HAP-1 (cell line): ENCODE measurements at regions of chr2 and their contacts with region 1.

Region 1: DNA sequence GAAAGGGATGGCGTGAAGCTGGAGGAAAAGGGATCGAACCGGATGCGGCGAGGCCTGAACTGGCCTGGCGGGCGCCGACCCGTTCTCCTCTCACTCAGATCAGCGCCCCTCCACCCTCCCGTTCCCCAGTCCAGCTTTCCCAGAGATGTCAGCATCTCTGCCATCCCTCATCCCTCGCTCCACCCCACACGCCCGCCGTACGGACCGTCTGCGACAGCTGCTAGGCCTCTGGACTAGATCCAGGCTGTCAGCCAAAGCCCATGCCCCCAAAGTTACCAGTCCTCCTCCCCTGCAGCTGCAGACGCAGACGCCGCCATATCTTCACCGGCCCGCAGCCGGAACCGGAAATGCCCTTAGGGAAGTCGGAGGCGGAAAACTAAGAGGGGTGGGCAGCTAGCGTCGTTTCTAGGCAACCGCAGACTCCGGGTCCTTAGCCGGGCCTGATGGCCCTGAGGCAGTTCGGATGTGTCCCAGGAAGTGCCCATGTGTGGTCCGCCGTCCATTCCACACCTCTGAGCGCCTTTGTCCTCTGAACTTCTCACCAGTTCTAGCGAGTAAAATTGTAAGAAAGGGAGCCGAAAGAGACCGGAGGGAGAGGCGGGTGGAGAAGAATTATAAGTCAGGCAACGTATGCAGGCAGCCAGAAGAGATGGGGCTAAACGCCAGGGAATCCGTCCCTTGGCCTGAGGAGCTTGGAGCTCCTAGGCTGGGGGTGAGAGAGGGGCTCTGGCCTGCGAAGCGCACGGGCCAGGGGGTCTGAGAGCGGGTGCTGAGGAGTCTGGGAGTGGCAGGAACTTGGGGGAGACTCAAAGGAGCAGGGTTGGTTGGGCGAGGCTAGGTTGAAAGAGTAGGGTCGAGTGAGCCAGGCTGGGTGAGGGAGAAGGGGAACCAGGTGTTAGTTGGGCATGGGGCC is at the starts of genes RNF25 and STK36:
- DNase-seq: peak; percentile 91 to 93
- H3K4me3 ChIP-seq: peak within 1 kb of the TSS; percentile 94
- H3K4me1 ChIP-seq: no peaks in the 10 kb centered on the region
- H3K27me3 ChIP-seq: no peaks in the 10 kb centered on the region

Region 2: DNA sequence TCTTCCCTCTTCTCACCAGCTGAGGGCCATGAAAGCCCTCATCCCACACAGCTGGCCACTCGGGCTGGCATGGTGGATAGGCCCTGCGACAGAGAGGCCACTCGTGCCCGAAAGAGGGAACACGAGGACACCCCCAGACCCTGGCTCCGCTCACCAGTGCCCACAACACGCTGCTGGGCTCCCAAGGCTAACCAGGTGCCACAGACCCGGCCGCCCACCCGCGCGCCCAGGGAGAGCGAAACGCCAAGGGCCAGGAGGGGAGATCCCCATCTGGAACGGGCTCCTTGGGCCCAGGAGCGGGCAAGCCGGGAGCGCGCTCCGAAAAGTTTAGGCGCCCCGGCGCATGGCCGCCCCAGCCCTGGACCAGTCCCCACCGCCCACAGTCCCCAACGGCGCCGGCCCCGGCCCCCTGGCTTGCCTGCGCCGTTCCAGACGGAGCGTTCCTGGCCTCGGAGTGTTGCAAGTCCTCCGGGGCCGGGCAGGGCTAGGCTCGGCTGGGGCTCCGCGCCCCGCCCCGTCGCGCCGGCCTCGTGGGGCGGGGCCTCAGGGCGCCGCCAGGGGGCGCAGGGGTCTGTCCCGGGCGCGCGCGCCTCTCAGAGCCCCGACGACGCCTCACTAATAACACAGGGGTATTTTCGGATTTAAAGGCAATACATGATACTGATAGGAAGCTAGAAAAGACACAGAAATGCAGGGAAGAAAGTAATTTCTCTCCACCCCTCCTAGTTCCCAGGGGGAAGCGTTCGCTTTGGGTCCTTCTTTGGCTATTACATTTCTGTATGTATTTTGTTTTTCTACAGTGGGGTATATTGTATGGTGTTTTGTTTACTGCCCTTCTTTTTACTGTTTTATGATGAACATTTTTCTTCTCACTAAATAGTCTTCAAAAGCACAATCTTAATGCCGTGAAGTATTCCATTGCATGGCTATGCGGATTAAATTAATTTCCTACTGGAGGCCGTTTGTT is 379.6 kb before region 1 on chr2 and contains the start of gene TMBIM1:
- in situ Hi-C with region 1: loop called (anchors 25 kb)
- DNase-seq: peak; percentile 68 to 81
- H3K4me3 ChIP-seq: peak within 1 kb of the TSS; percentile 71
- H3K4me1 ChIP-seq: peaks cover 20% of the 10 kb centered on the region
- H3K27me3 ChIP-seq: no peaks in the 10 kb centered on the region

Region 3: DNA sequence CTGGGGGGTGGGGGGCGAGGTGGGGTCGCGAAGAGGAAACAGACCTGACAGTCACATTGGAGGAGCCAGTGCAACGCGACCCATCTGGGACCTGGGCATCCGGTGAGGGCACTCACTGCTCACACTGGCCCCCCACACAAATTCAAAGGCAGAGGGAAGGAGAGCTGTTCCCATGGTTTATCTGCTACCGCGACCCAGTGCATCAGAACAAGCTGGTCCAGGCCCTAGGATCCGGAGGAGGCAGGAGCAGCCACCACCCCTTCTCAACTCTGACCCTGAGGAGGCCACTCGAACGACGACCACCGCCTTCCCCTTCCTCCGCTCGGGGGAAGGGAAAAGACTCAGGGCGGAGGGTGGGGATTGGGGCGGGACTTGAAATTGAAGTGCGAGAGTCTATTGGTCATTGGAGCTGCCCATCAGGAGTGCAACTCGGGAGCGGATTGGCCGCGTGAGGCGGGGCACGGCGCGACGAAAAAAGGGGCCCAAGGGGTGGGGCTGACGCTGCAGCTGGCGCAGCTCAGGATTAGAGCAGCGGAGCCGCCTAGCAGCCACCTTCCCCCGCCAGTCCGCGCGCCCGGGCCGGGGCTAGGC is 287.3 kb after region 1 on chr2 and contains the start of gene CDK5R2:
- in situ Hi-C with region 1: no loop called
- DNase-seq: peak; percentile 86 to 96
- H3K4me3 ChIP-seq: peak within 1 kb of the TSS; percentile 38
- H3K4me1 ChIP-seq: peaks cover 9% of the 10 kb centered on the region
- H3K27me3 ChIP-seq: peaks cover 14% of the 10 kb centered on the region

Region 4: GRCh38 chr2:220259662-220260061 is 1587.8 kb after region 1 on chr2:
- in situ Hi-C with region 1: no loop called
- DNase-seq: no peak
- H3K4me3 ChIP-seq: no peak overlapping the region
- H3K4me1 ChIP-seq: no peaks in the 10 kb centered on the region
- H3K27me3 ChIP-seq: no peaks in the 10 kb centered on the region